Transverse colon (tissue), 4 donors: ENCODE measurements at regions of chr18 and their contacts with region 1.

Region 1: DNA sequence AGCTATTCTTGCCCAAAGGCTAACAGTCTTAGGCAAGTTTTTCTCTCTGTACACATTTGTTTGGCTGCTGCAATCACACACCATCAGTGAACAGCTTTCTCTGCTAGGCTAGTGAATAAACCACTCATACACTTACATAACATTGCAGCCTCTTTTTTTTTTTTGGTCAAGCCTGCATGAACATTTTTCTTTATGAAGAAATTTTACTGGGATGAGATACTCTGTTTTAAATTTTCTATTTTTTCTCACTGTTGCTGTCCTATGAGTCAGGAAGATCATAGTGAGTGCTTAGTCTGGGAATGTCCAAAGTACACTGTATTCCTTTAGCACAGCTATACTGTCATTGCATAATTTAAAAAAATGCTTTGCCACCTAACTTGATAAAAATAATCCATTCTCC is 58.5 kb downstream of the ROCK1 start:
- DNase-seq: no peak
- H3K4me3 ChIP-seq: no peak overlapping the region
- H3K27ac ChIP-seq: peak overlapping the region in 3 of 4 donors; percentile 21 to 51 (median 39)
- H3K4me1 ChIP-seq: peaks cover 0 to 36% (median 6%) of the 10 kb centered on the region in 4 donors
- H3K27me3 ChIP-seq: no peaks in the 10 kb centered on the region
- CTCF ChIP-seq: no peak
- EP300 ChIP-seq: no peak
- POLR2A ChIP-seq: no peak

Region 2: DNA sequence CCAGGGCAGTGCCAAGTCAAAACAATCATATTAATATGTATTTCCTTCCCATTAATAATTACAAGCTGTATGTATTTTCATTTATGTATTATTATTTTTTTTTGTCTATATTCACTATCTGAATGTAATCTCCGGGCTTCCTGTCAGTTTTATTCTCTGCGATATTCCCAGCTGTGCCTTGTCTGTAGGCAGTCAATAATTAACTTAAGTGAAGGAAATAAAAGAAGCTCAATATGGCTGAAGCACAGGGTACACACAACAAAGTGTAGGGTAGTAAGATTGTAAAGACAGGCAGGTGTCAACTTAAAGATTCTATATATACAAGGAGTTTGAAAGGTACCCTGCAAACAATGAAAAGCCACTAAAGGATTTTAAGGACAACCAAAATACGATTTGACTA is 64.4 kb before region 1 on chr18:
- in situ Hi-C with region 1: loop called in 1 of 4 experiments (anchors 10 kb)
- intact Hi-C with region 1: no loop called
- DNase-seq: no peak
- H3K4me3 ChIP-seq: no peak overlapping the region
- H3K27ac ChIP-seq: no peak overlapping the region
- H3K4me1 ChIP-seq: no peaks in the 10 kb centered on the region
- H3K27me3 ChIP-seq: no peaks in the 10 kb centered on the region
- CTCF ChIP-seq: no peak
- EP300 ChIP-seq: no peak
- POLR2A ChIP-seq: no peak

Region 3: GRCh38 chr18:21134898-21135297 is 81.8 kb after region 1 on chr18:
- in situ Hi-C with region 1: loop called in 1 of 4 experiments (anchors 25 kb)
- intact Hi-C with region 1: no loop called
- DNase-seq: no peak
- H3K4me3 ChIP-seq: no peak overlapping the region
- H3K27ac ChIP-seq: no peak overlapping the region
- H3K4me1 ChIP-seq: no peaks in the 10 kb centered on the region
- H3K27me3 ChIP-seq: no peaks in the 10 kb centered on the region
- CTCF ChIP-seq: peak in 3 of 5 experiments; percentile 12 to 25 (median 22)
- EP300 ChIP-seq: no peak
- POLR2A ChIP-seq: no peak

Region 4: DNA sequence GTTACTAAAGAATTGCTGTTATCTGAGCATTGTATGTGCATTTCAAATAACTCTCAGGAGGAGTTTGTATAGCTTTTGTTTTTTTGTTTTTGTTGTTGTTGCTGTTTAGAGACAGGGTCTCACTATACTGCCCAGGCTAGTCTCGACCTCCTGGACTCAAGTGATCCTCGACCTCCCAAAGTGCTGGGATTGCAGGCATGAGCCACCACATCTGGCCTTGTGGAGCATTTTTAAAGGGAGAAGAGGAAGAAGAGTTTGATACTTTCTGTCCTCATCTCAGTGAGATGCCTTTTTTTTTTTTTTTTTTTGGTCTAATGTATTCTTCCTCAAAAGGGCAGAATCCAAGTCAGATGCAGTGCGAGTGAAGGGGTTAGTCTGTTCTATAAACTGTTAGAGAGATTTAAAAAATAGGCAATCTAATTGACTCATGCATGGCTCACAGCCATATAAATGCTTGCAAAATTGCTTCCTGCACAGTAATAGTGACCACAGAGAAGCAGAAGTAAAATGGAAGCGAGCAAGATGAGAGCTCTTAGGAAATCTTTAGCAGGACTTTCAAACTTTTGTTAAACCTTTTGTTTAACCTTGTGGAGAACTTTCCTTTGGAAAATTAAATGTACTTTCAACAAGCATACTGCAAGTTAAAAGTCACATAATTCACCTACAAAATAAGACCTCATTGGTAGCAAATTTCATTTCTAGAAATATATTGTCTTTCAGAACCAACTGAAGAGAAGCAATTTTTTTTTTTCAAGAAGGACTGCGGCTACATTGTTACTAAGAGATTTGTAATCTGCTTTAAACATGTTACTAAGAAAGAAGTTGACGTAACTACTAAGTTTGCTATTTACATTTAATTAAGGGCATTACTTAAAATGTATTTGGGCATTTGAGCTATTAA is 110.8 kb after region 1 on chr18:
- in situ Hi-C with region 1: loop called in 1 of 4 experiments (anchors 25 kb)
- intact Hi-C with region 1: no loop called
- DNase-seq: no peak
- H3K4me3 ChIP-seq: no peak overlapping the region
- H3K27ac ChIP-seq: peak overlapping the region; percentile 24 to 59 (median 50)
- H3K4me1 ChIP-seq: peaks cover 0 to 14% (median 0%) of the 10 kb centered on the region in 4 donors
- H3K27me3 ChIP-seq: no peaks in the 10 kb centered on the region
- CTCF ChIP-seq: no peak
- EP300 ChIP-seq: no peak
- POLR2A ChIP-seq: no peak